Activated CD4-positive, alpha-beta memory T cell treated with anti-CD3 and anti-CD28 coated beads, Interleukin-2, amount 10 ng/mL, durations not matched to agents 7 days and 5 days (primary cell): ENCODE measurements at regions of chr3 and their contacts with region 1.

Region 1: GRCh38 chr3:49445381-49445780 is 16.3 kb upstream of the NICN1 start:
- DNase-seq: no peak
- H3K4me3 Mint-ChIP-seq: no peak overlapping the region
- H3K27ac Mint-ChIP-seq: peak overlapping the region; percentile 44
- H3K4me1 Mint-ChIP-seq: peaks cover 21% of the 10 kb centered on the region
- H3K27me3 Mint-ChIP-seq: no peaks in the 10 kb centered on the region

Region 2: GRCh38 chr3:49428697-49429100 is 16.7 kb before region 1 on chr3:
- CTCF ChIA-PET with region 1: interaction called, 9 read pairs
- POLR2A ChIA-PET with region 1: interaction called, 17 read pairs
- DNase-seq: no peak
- H3K4me3 Mint-ChIP-seq: peak overlapping the region; percentile 82
- H3K27ac Mint-ChIP-seq: peak overlapping the region; percentile 95
- H3K4me1 Mint-ChIP-seq: peaks cover 36% of the 10 kb centered on the region
- H3K27me3 Mint-ChIP-seq: no peaks in the 10 kb centered on the region

Region 3: DNA sequence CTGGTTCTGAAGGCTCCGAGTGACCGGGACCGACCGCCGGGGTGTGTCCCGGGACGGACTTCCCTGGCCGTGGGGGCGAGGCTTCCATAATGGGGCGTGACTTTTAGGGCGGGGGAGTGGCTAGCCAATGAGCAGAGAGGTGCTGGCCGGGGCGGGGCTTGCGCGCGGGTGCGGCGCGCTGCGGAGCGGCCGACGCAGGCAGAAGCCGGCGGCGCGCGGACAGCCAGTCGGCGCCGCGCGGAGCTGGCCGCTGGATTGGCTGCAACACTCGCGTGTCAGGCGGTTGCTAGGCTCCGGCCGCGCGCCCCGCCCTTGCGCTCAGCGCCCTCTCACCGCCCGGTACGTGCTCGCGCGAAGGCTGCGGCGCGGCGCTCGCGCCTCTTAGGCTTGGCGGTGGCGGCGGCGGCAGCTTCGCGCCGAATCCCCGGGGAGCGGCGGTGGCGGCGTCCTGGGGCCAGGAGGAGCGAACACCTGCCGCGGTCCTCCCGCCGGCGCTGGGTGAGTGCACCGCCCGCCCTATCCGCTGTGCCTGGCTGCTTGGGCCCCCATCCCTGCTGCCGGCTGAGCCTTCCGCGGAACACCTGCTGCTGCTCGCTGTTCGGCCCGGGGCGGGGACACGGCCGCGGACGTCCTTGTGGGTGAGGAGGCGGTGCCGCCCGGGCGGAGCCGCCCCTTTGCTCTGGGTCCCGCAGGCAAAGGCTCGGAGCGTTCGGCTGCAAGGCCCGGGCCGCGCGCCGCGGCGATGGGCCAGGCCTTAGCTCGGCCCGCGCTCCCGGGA is 24.7 kb after region 1 on chr3 and contains the start of gene DAG1:
- CTCF ChIA-PET with region 1: interaction called, 7 read pairs
- POLR2A ChIA-PET with region 1: interaction called, 12 read pairs
- DNase-seq: peak; percentile 97
- H3K4me3 Mint-ChIP-seq: peak within 1 kb of the TSS; percentile 89
- H3K27ac Mint-ChIP-seq: peak within 1 kb of the TSS; percentile 94
- H3K4me1 Mint-ChIP-seq: peaks cover 22% of the 10 kb centered on the region
- H3K27me3 Mint-ChIP-seq: no peaks in the 10 kb centered on the region
- total RNA-seq, gene DAG1: 13.8 to 16.5 TPM